HEK293 (cell line): ENCODE measurements at regions of chr12 and their contacts with region 1.

Region 1: DNA sequence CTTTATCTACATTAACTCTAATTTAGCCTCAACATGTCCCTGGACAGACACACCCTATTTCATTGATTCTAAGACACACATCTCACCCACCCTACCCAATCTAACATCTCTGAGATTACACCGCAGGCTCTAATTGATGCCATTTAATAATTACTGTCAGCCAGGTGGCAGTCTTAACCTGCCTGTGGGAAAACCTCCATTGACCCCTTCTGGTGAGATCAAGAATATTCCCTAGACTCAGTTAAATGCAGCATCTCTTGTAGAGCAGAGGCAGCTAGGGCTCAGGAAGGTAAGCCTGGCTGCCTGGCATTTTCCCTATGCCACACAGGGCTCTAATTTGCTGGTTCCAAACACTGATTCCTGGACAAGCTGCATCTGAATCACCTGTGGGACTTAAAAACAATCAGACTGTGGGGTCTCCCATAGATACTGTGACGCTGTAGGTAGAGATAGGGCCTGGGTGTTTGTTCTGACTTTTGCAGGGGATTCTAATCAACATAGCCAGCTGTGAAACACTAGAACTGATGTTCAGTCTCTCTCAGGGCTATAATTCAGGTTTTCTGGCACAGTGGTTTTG is 14.3 kb downstream of the MCRS1 start:
- H3K4me3 ChIP-seq: no peak overlapping the region
- H3K27ac ChIP-seq: no peak overlapping the region
- H3K4me1 ChIP-seq: no peaks in the 10 kb centered on the region
- CTCF ChIP-seq: peak; percentile 86

Region 2: GRCh38 chr12:49567611-49568441 is 14.2 kb after region 1 on chr12 and contains the start of gene MCRS1:
- CTCF ChIA-PET with region 1: interaction called, 21 read pairs
- POLR2A ChIA-PET with region 1: interaction called, 5 read pairs
- H3K4me3 ChIP-seq: peak within 1 kb of the TSS; percentile 88
- H3K27ac ChIP-seq: peak within 1 kb of the TSS; percentile 69
- H3K4me1 ChIP-seq: no peaks in the 10 kb centered on the region
- CTCF ChIP-seq: no peak

Region 3: DNA sequence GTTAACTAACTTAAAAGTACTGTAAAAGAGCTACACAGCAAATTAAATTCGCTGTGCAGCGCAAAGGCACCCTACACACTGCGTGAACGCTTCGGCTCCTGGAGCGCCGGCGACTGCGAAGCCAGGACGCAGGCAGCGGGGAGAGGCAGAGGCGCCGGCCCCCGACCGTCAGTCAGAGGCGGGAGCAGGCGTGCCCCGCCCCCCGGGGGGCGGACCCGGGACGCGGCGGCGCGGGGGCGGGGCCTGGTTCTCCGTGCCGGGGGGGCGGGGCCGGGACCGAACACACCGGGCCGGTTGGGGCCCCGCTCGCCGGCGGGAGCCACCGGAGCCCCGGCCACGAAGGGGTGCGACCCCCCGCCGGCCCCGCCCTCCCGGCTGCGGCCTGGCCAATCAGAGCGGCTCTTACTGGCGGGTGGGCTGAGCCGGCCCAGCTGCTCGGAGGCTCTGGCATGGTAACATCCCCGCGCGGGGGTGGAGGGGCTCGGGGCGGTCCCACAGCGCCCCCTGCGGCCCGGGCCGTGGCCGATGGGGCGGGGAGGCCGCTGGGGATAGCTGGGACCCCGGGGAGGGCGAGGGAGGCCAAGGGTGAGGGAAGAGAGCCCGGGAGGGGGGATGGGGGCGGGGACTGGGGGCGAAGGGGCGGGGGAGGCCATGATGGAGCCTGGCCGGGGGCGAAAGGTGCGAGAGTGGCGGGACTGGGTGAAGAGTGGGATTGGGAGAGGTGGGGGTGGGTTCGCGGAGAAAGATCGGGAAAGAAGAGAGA is 69.7 kb after region 1 on chr12 and contains the start of gene PRPF40B:
- CTCF ChIA-PET with region 1: interaction called, 12 read pairs
- POLR2A ChIA-PET with region 1: no interaction called
- H3K4me3 ChIP-seq: peak within 1 kb of the TSS; percentile 49
- H3K27ac ChIP-seq: peak within 1 kb of the TSS; percentile 1
- H3K4me1 ChIP-seq: no peaks in the 10 kb centered on the region
- CTCF ChIP-seq: peak; percentile 22; the same call in 1 of the 2 replicates